ENCODE measurements at regions of chr17 and their contacts with region 1.

Region 1: GRCh38 chr17:41786227-41787020 is at the start of gene JUP:
- DNase-seq: peak; percentile 100
- H3K4me3 ChIP-seq: peak within 1 kb of the TSS; percentile 64 to 80 (median 72)
- H3K27ac ChIP-seq: peak within 1 kb of the TSS; percentile 70
- H3K4me1 ChIP-seq: peaks cover 2 to 19% (median 14%) of the 10 kb centered on the region in 4 experiments
- H3K27me3 ChIP-seq: no peaks in the 10 kb centered on the region
- CTCF ChIP-seq: peak; percentile 71 to 78 (median 76)
- EP300 ChIP-seq: 0 out of 3 replicates have a peak, but pooled peaks of 1 of the 2 experiments have one; percentile 54
- POLR2A ChIP-seq: peak; percentile 70 to 84
- RAD21 ChIP-seq: peak; percentile 26 to 52; a peak in 3 of 4 replicates
- total RNA-seq, gene JUP: 98.6 and 102 TPM in 2 replicates

Region 2: DNA sequence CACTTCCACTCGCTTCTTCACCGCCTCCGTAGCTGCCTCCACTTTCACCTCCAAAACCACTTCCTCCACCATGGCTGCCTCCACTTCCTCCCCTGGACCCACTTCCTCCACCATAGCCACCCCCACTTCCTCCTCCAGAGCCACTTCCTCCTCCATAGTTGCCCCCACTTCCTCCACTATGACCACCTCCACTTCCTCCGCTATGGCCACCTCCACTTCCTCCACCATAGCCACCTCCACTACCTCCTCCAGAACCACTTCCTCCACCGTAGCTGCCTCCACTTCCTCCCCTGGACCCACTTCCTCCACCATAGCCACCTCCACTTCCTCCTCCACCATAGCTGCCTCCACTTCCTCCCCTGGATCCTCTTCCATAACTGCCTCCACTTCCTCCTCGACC is 219.1 kb before region 1 on chr17:
- CTCF ChIA-PET with region 1: no interaction called
- POLR2A ChIA-PET with region 1: no interaction called
- DNase-seq: no peak
- H3K4me3 ChIP-seq: no peak overlapping the region
- H3K27ac ChIP-seq: no peak overlapping the region
- H3K4me1 ChIP-seq: no peaks in the 10 kb centered on the region
- H3K27me3 ChIP-seq: no peaks in the 10 kb centered on the region
- CTCF ChIP-seq: no peak
- EP300 ChIP-seq: no peak
- POLR2A ChIP-seq: no peak
- RAD21 ChIP-seq: no peak

Region 3: GRCh38 chr17:41730479-41730878 is 55.9 kb before region 1 on chr17:
- CTCF ChIA-PET with region 1: no interaction called
- POLR2A ChIA-PET with region 1: interaction called, 13 read pairs
- DNase-seq: no peak
- H3K4me3 ChIP-seq: no peak overlapping the region
- H3K27ac ChIP-seq: no peak overlapping the region
- H3K4me1 ChIP-seq: peaks cover 0 to 3% (median 0%) of the 10 kb centered on the region in 4 experiments; a peak in 5 of 7 replicates
- H3K27me3 ChIP-seq: peaks cover 14 to 45% (median 38%) of the 10 kb centered on the region in 4 experiments
- CTCF ChIP-seq: no peak
- EP300 ChIP-seq: no peak
- POLR2A ChIP-seq: no peak
- RAD21 ChIP-seq: no peak

Region 4: DNA sequence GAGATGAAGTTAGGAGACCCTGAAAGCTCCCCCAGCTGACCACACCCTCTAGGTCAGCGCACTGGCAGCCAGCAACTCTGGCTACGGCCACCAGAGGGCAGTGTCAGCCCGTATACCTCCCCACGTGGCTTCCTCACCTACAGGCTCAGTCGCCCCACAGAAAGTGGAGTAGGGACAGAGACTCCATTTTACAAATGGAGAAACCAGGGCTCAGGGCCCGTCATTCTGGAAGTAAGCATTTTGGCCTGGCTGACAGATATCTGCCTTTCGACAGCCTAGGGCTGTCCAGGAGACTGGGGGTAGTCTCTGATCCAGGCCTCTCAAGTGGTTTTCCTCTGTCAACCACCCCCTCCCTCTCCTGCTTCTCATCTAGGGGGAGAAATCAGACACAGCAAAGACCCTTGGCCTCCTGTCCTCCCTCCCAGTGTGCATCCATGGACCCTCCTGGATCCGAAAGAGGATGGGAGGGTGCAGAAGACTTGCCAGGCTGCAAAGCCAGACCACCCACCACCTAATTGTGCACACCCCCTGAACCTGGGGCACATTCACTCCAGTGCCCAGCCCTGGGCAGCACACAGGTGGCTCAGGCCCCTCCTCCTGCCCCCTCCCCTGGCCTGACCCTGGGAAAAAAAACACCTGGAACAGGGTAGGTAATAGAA is 48.2 kb before region 1 on chr17:
- CTCF ChIA-PET with region 1: interaction called, 8 read pairs
- POLR2A ChIA-PET with region 1: interaction called, 19 read pairs
- DNase-seq: peak; percentile 69 to 95
- H3K4me3 ChIP-seq: no peak overlapping the region
- H3K27ac ChIP-seq: peak overlapping the region; percentile 79
- H3K4me1 ChIP-seq: peaks cover 0 to 11% (median 8%) of the 10 kb centered on the region in 4 experiments; a peak in 6 of 7 replicates
- H3K27me3 ChIP-seq: peaks cover 13 to 45% (median 33%) of the 10 kb centered on the region in 4 experiments
- CTCF ChIP-seq: peak; percentile 97 to 99 (median 98)
- EP300 ChIP-seq: 0 out of 3 replicates have a peak, but pooled peaks of 1 of the 2 experiments have one; percentile 34
- POLR2A ChIP-seq: 0 out of 3 replicates have a peak, but pooled peaks of 1 of the 2 experiments have one; percentile 19
- RAD21 ChIP-seq: peak; percentile 99 to 100

Region 5: GRCh38 chr17:41750862-41751261 is 35.6 kb before region 1 on chr17:
- CTCF ChIA-PET with region 1: interaction called, 10 read pairs
- POLR2A ChIA-PET with region 1: interaction called, 12 read pairs
- DNase-seq: no peak
- H3K4me3 ChIP-seq: no peak overlapping the region
- H3K27ac ChIP-seq: no peak overlapping the region
- H3K4me1 ChIP-seq: no peaks in the 10 kb centered on the region
- H3K27me3 ChIP-seq: no peaks in the 10 kb centered on the region; a peak in 2 of 7 replicates
- CTCF ChIP-seq: no peak
- EP300 ChIP-seq: no peak
- POLR2A ChIP-seq: no peak
- RAD21 ChIP-seq: no peak

Region 6: DNA sequence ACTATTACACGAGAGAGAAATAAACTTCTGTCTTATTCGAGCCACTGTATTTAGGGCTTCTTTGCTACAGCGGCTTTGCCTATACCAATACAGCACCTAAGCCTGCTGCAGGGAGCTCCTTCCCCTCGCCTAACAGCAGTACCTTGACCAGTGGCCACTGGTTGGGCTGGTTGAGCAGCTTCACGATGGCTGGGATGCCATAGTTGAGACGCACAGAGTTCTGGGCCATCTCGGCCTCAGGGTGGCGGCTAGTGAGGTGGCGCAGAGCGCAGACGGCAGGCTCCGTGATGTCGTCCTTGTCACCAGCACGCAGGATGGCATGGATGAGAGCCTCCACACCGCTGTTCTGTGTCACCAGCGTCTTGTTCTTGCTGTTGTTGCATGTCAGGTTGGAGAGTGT is 23.6 kb before region 1 on chr17:
- CTCF ChIA-PET with region 1: interaction called, 10 read pairs
- POLR2A ChIA-PET with region 1: interaction called, 5 read pairs
- DNase-seq: no peak
- H3K4me3 ChIP-seq: no peak overlapping the region
- H3K27ac ChIP-seq: no peak overlapping the region; the same call in 1 of the 2 replicates
- H3K4me1 ChIP-seq: no peaks in the 10 kb centered on the region
- H3K27me3 ChIP-seq: no peaks in the 10 kb centered on the region
- CTCF ChIP-seq: no peak
- EP300 ChIP-seq: no peak
- POLR2A ChIP-seq: no peak
- RAD21 ChIP-seq: no peak

Region 7: DNA sequence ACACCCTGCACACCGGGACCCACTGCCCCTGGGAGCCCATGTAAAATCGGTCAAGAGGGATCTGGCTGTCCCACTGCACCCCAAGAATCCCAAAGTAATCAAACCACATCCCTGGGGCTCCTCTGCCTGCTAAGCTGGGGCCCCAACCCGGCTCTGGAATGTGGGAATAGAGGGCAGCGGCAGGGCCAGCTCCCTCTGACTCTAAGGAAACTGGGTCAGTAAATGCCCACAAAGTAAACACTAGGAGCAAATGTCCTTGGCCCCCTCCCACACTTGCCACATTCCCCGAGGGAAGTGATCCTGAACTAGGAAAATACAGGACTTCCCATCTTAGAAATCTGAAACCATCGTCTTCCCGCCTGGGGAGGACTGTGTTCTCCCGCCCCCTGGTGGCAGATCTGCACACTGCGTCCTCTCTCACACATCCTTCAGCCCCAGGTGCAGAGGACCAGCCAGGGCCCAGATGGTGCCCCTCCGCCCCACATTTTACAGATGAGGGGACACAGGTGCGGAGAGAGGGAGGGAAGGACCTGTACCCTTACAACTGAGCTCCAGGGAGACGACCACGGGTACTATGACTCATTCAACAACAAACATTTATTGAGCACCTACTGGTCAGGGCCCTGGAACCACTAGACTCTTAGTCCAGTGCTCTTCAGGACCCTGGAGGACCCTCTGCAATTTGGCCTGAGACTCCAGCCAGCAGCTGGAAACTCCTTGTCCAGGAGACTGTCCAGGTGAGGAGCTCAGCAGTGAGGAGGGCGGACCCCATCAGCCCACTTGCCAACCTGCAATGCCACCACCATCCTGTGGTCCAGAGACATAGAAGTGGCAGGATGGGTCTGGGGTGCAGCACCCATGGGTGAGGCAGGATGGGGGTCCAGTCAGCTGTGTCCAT is 15.2 kb after region 1 on chr17:
- CTCF ChIA-PET with region 1: interaction called, 149 read pairs
- POLR2A ChIA-PET with region 1: interaction called, 71 read pairs
- DNase-seq: peak in 1 of 2 experiments; percentile 97
- H3K4me3 ChIP-seq: peak overlapping the region in 2 of 4 experiments; percentile 21 to 34; a peak in 4 of 8 replicates
- H3K27ac ChIP-seq: 0 out of 2 replicates have a peak overlapping the region, but pooled peaks have one; percentile 1
- H3K4me1 ChIP-seq: peaks cover 5 to 15% (median 10%) of the 10 kb centered on the region in 4 experiments
- H3K27me3 ChIP-seq: no peaks in the 10 kb centered on the region
- CTCF ChIP-seq: peak; percentile 92 to 97 (median 97)
- EP300 ChIP-seq: no peak
- POLR2A ChIP-seq: peak in 1 of 2 experiments; percentile 17; a peak in 1 of 3 replicates
- RAD21 ChIP-seq: peak; percentile 88 to 91

Region 8: GRCh38 chr17:41864836-41865595 is 78.6 kb after region 1 on chr17 and contains the start of gene KLHL11:
- CTCF ChIA-PET with region 1: interaction called, 3 read pairs
- POLR2A ChIA-PET with region 1: interaction called, 26 read pairs
- DNase-seq: peak; percentile 58 to 90
- H3K4me3 ChIP-seq: peak within 1 kb of the TSS; percentile 86 to 94 (median 92)
- H3K27ac ChIP-seq: peak within 1 kb of the TSS; percentile 42
- H3K4me1 ChIP-seq: peaks cover 9 to 25% (median 13%) of the 10 kb centered on the region in 4 experiments
- H3K27me3 ChIP-seq: no peaks in the 10 kb centered on the region
- CTCF ChIP-seq: no peak; a peak in 1 of 4 replicates
- EP300 ChIP-seq: peak in 1 of 2 experiments; percentile 56; a peak in 1 of 3 replicates
- POLR2A ChIP-seq: peak; percentile 42 to 87
- RAD21 ChIP-seq: peak in 1 of 2 experiments; percentile 0; a peak in 2 of 4 replicates
- total RNA-seq, gene KLHL11: 12.8 and 13.7 TPM in 2 replicates

Region 9: DNA sequence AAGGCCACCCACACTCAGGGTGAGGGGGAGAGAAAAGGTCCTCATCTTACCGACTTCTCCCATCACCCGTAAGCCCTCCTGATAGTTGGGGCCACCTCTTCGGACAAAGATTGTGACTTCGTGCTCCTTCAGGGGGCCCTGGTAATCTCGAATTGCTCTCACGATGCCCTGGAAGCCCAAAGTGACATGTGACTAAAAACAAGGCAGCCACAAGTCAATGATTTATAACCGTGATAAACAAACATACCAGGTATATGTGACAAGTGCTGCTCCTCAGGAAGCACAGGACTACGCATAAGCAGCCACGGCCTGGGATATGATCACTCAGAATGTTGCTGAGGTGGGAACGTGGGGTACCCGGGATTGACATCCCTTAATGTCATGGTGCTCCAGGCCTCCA is 115.2 kb after region 1 on chr17:
- CTCF ChIA-PET with region 1: no interaction called
- POLR2A ChIA-PET with region 1: no interaction called
- DNase-seq: no peak
- H3K4me3 ChIP-seq: no peak overlapping the region
- H3K27ac ChIP-seq: no peak overlapping the region
- H3K4me1 ChIP-seq: no peaks in the 10 kb centered on the region
- H3K27me3 ChIP-seq: no peaks in the 10 kb centered on the region
- CTCF ChIP-seq: no peak
- EP300 ChIP-seq: no peak
- POLR2A ChIP-seq: no peak
- RAD21 ChIP-seq: no peak